Activated T-helper 1 cell treated with anti-CD3 and anti-CD28 coated beads, Interleukin-12 subunit alpha, Interleukin-12 subunit beta, Interleukin-2, Interleukin-4 antibody, amounts not matched to agents 30 ng/mL and 10 ng/mL and 1 ng/mL, durations not matched to agents 14 hours and 24 hours and 36 hours (primary cell): ENCODE measurements at regions of chr3 and their contacts with region 1.

Region 1: GRCh38 chr3:36868614-36869436 is 76.0 kb downstream of the TRANK1 start:
- DNase-seq: peak; percentile 24
- H3K4me3 Mint-ChIP-seq: no peak overlapping the region
- H3K27ac Mint-ChIP-seq: no peak overlapping the region
- H3K4me1 Mint-ChIP-seq: peaks cover 11% of the 10 kb centered on the region
- H3K27me3 Mint-ChIP-seq: peaks cover 6% of the 10 kb centered on the region

Region 2: DNA sequence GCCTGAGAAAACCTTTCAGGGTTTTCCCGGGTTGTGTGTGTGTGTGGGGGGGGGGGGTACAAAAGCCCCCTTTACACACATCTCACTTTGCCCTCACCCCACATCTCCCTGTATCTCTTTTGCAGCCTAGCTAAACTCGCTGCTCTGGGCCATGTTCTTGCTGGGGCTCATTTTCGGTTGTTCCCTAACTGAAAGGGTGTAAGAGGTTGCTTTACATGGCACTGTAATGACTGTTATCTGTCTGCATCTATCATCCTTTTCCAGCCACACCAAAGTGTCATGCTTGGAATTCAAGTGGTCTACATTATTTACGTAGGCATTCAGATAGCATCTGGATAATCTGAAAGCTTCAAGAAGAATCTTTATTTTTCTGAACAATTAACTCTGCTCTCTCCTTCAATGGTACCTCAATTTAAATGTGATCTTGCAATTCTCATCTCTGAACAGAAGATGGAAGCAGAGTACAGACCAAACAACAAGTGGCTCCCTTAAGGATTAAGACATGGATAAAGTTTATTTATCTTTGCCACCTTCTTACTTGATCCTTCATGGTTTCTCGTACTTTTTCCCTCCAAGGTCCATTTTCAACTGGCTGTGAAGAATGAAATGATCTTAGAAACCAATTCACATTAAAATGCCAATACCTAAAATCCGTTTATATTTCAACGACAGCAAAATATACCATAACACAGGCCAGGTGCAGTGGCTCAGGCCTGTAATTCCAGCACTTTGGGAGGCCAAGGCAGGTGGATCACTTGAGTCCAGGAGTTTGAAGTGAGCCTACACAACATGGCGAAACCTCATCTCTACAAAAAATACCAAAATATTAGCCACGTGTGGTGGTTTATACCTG is 139.4 kb before region 1 on chr3:
- intact Hi-C with region 1: loop called (anchors 1 kb)
- DNase-seq: no peak
- H3K4me3 Mint-ChIP-seq: no peak overlapping the region
- H3K27ac Mint-ChIP-seq: no peak overlapping the region
- H3K4me1 Mint-ChIP-seq: no peaks in the 10 kb centered on the region
- H3K27me3 Mint-ChIP-seq: peaks cover 14% of the 10 kb centered on the region

Region 3: DNA sequence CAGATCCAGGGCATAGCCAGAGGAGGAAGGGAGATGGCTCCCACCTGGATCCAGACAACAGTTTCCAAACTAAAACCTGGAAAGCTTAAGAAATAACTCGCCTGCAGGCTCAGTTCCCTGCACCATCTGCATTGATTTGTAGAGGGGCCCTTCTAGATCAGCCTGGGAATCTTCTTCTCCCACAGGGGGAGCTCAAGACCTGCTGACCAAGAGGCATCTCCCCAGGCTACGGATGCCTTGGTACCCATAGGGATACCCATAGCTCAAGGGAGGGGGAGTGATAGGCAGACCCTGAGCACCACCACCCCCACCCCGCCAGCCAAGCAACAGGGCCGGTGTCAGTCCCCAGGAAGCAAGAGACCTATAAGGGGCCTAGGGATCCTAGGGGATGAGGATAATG is 76.5 kb before region 1 on chr3:
- intact Hi-C with region 1: loop called (anchors 1 kb)
- DNase-seq: no peak
- H3K4me3 Mint-ChIP-seq: no peak overlapping the region
- H3K27ac Mint-ChIP-seq: no peak overlapping the region
- H3K4me1 Mint-ChIP-seq: no peaks in the 10 kb centered on the region
- H3K27me3 Mint-ChIP-seq: peaks cover 17% of the 10 kb centered on the region

Region 4: DNA sequence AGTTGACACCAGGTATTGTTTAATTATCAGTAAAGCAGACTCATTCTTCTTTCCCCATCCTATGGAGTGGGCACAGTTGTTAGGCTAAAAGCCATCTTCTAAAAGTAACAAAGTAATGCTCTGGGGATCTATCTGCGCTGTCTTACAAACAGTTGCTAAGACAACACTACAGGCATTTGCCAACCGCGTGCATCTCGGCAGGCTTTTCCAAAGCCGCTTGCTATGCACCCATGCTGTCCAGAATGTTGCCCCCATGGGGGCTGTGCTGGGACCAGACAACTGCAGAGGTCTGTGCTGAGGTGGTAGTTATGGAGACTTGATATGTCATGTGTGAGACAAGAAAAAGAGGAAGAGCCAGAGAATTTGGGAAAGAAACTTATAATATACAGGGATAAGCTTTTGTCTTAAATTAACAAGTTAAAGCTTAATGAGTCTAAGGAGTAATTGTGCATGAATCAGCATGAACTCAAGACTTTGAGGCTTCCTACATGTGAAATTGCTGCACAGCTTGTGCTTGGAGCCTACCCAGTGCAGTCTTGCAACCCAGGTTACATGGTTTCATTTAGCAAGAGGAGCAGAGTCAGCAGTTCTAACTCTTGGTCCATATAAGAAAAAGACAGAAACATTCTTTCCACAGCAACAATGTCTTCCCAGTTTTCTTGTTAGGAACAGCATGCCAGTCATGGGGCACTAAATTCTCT is 65.6 kb before region 1 on chr3:
- intact Hi-C with region 1: no loop called
- DNase-seq: no peak
- H3K4me3 Mint-ChIP-seq: no peak overlapping the region
- H3K27ac Mint-ChIP-seq: no peak overlapping the region
- H3K4me1 Mint-ChIP-seq: no peaks in the 10 kb centered on the region
- H3K27me3 Mint-ChIP-seq: peaks cover 19% of the 10 kb centered on the region